ENCODE measurements at regions of chr2 and their contacts with region 1.

Region 1: DNA sequence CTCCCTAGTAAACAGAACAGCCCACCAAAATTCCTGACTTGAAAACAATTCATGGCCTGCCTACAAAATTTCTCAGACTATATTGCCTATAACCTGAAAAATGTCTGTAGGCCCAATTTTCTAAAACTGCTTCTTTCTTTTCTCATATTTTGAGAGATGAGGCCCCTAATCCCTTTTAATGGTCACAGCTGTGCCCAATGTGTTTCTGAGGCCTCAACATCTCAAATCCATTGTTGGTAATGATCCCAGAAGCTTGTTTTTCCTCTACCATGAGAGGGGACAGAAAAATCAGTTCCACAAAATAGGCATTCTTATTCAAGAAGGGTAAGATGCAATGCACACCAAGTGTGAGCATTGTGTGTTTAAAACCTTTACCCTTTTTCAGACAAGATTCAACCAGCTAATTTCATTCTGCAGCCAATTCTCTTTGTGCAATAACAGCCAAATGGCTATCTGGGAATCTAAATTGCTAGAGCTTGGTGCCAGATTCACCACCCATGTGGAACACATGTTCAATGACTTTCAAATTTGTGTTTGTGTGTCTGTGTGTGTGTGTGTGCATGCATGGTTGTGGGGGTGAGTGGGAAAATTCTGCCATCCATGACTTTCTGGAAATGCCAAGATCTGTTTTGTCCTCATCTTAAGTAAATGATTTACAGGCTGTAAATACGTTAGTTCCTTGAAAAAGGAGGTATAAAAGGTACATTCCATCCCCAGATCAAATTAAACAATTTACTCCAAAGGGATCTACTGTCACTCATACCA is 319.5 kb downstream of the TNS1 start:
- DNase-seq: no peak
- H3K4me3 ChIP-seq: no peak overlapping the region
- CTCF ChIP-seq: no peak

Region 2: DNA sequence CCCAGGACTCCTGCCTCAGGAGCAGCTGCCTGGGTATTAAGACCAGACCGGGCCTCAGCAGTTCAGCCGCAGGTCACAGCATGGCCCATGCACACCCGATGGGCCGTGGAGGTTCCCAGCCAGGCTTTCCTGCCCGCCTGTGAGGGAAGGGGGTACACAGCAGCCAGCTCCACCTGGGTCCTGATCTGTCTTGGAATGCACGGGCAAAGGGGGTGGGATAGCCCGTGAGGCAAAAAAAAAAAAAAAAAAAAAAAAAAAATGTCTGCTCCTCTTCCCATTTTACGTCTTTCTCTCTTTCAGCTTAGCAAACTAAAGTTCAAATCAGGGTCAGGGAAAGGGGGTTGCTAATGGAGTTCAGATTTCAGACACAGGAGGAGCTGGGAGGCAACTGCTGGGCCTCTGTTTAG is 65.7 kb before region 1 on chr2:
- in situ Hi-C with region 1: loop called (anchors 5 kb)
- DNase-seq: no peak
- H3K4me3 ChIP-seq: no peak overlapping the region
- CTCF ChIP-seq: no peak

Region 3: GRCh38 chr2:217774232-217774631 is 90.9 kb after region 1 on chr2:
- in situ Hi-C with region 1: no loop called
- DNase-seq: no peak
- H3K4me3 ChIP-seq: no peak overlapping the region
- CTCF ChIP-seq: no peak

Measured in astrocyte of the cerebellum (primary cell).